Endothelial cell of umbilical vein (primary cell): ENCODE measurements at regions of chr12 and their contacts with region 1.

Region 1: GRCh38 chr12:132761032-132761920 is at the start of gene ANKLE2:
- DNase-seq: peak; percentile 52
- H3K4me3 ChIP-seq: peak within 1 kb of the TSS; percentile 81 to 87 (median 86)
- H3K27ac ChIP-seq: peak within 1 kb of the TSS; percentile 75
- H3K4me1 ChIP-seq: peaks cover 12% of the 10 kb centered on the region
- H3K27me3 ChIP-seq: no peaks in the 10 kb centered on the region
- CTCF ChIP-seq: no peak
- POLR2A ChIP-seq: no peak
- total RNA-seq, gene ANKLE2: 96.2 and 112 TPM in 2 replicates

Region 2: DNA sequence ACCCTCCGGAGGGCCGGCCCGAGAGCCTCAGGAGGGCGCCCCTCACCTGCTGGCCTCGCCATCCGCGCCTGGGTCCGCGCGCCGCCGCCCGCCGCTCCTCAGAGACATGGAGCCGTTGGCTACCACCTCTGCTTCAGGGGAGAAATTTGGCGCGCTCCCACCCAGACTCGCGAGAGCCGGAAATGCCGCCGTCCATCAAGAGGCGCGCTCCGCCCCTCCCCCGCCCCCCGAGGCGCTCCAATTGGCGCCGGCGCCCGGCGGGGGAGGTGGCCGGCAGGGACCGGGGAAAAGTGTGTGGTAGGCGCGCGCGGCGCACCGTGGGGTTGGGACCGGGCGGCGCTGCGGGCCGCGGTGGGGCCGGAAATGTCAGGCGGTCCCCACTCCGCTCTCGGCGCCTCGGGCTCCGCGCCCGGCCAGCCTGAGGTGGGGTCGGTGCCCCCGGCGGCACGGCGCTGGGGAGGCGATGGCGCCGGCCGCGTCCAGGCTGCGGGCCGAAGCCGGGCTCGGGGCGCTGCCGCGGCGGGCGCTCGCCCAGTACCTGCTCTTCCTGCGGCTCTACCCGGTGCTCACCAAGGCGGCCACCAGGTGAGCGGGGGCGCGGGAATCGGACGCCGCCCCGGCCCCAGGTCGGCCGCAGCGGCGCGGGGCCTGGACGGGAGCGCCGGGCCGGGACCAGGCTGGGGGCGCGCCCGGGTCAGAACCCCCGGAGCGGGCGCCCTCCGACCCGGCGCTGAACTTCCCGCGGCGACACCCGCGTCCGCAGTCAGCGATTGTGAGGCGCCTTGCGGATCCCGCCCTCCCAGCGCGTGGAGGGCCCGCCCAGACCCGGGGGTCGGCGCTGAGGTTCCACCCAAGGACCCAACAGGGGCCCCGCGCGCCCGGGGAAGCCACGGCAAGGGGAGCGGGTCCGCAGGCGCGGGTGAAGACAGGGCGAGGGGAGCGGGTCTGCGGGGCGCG is 73.8 kb before region 1 on chr12 and contains the starts of genes POLE and PXMP2:
- CTCF ChIA-PET with region 1: no interaction called
- POLR2A ChIA-PET with region 1: no interaction called
- dilution Hi-C with region 1: no loop called
- intact Hi-C with region 1: loop called (anchors 1 kb)
- DNase-seq: peak; percentile 92
- H3K4me3 ChIP-seq: peak within 1 kb of the TSS; percentile 37 to 77 (median 62)
- H3K27ac ChIP-seq: peak within 1 kb of the TSS; percentile 62
- H3K4me1 ChIP-seq: no peaks in the 10 kb centered on the region
- H3K27me3 ChIP-seq: no peaks in the 10 kb centered on the region
- CTCF ChIP-seq: no peak
- POLR2A ChIP-seq: peak; percentile 70
- total RNA-seq, gene POLE: 73.7 and 82.7 TPM in 2 replicates
- total RNA-seq, gene PXMP2: 21.1 and 24.0 TPM in 2 replicates

Region 3: GRCh38 chr12:132700212-132700822 is 61.0 kb before region 1 on chr12:
- CTCF ChIA-PET with region 1: no interaction called
- POLR2A ChIA-PET with region 1: no interaction called
- dilution Hi-C with region 1: no loop called
- intact Hi-C with region 1: no loop called
- DNase-seq: peak; percentile 20
- H3K4me3 ChIP-seq: no peak overlapping the region
- H3K27ac ChIP-seq: no peak overlapping the region
- H3K4me1 ChIP-seq: no peaks in the 10 kb centered on the region
- H3K27me3 ChIP-seq: no peaks in the 10 kb centered on the region
- CTCF ChIP-seq: no peak
- POLR2A ChIP-seq: no peak

Region 4: GRCh38 chr12:132710422-132711168 is 50.7 kb before region 1 on chr12 and contains the start of gene PGAM5:
- CTCF ChIA-PET with region 1: no interaction called
- POLR2A ChIA-PET with region 1: no interaction called
- dilution Hi-C with region 1: no loop called
- intact Hi-C with region 1: loop called (anchors 2 kb)
- DNase-seq: peak; percentile 82
- H3K4me3 ChIP-seq: peak within 1 kb of the TSS; percentile 75 to 97 (median 97)
- H3K27ac ChIP-seq: peak within 1 kb of the TSS; percentile 19
- H3K4me1 ChIP-seq: peaks cover 5% of the 10 kb centered on the region
- H3K27me3 ChIP-seq: no peaks in the 10 kb centered on the region
- CTCF ChIP-seq: no peak
- POLR2A ChIP-seq: peak; percentile 88
- total RNA-seq, gene PGAM5: 45.7 and 52.8 TPM in 2 replicates

Region 5: DNA sequence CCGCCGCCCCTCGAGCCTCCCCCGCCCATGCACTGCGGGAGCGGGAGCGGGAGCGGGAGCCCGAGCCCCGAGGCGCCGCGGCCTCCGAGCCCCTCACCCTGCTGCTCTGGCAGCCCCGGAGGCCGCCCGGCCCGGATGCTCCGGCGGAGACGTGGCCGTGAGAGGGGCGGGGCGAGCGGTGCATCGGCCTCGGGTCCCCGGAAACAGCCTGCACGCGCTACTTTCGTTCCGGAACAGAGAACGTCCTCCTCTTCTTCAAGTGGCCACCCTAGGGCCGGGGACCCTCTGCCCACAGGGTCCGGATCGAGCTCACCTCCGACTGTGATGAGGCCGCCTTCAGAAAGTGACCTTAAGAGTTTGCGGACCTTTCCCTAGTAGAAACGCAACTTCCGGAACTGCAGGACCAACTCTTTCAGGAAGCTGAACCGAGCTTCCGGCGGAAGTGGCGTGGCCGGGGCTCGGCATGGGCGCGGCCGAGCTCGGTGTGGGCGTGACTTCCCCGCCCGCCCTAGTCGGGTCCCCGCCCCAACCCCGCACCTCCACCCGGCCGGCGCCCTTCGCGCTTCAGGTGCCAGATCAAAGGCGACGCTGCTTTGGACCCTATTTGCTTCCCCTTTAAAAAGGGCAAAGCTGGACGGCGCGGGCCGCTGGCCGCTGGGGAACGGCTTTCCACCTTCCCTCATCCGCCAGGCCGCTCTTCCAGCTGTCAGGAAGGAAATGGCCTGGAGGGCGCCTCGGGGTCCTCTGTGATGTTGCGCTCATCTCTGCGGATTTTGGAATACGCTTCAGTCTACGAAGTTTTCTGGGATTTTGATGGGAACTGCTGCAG is 67.6 kb after region 1 on chr12 and contains the start of gene GOLGA3:
- CTCF ChIA-PET with region 1: no interaction called
- POLR2A ChIA-PET with region 1: no interaction called
- dilution Hi-C with region 1: no loop called
- intact Hi-C with region 1: loop called (anchors 2 kb)
- DNase-seq: peak; percentile 92
- H3K4me3 ChIP-seq: peak within 1 kb of the TSS; percentile 42 to 100 (median 80)
- H3K27ac ChIP-seq: peak within 1 kb of the TSS; percentile 96
- H3K4me1 ChIP-seq: peaks cover 9% of the 10 kb centered on the region
- H3K27me3 ChIP-seq: no peaks in the 10 kb centered on the region
- CTCF ChIP-seq: no peak
- POLR2A ChIP-seq: peak; percentile 85
- total RNA-seq, gene GOLGA3: 83.4 and 86.0 TPM in 2 replicates